ENCODE measurements at regions of chr20 and their contacts with region 1.

Region 1: DNA sequence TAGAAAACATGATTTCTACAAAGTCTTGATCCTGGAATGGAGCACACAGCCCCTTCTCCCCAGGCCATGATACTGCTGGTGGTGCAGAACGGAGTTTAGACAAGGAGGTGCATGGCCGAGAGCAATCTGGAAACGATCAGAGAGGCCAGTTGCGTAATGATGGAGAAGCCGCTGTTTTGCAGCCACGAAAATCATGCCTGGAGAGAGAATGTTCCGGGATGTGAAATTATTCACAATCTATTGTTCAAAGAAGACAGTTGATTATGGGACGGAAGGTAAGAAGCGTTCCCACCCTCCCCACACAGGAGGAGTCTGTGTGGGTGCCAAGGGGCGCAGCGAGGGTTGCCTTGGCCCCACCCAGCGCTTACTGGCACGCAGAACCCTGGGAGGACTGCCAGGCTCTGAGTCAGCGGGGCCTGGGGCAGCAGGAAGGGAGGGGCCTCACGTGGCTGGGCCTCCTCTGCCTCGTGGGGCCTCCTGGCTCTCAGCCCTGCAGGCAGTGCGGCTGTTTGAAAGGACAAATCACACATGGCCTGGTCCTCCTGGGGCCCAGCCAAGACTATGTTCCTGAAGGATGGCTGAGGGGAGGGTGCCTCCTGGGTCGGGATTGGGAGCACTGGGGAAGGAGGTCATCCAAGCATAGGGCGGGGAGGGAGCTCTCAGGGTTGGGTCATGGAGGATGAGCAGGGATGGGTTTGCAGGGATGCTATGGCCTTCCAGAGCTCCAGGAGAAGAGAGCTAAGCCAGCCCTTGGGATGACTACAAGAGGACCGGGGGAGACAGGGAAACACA is 8.7 kb upstream of the AP5S1 start:
- DNase-seq: peak; percentile 94
- H3K4me3 Mint-ChIP-seq: peak overlapping the region; percentile 71
- H3K27ac Mint-ChIP-seq: peak overlapping the region; percentile 99
- H3K4me1 Mint-ChIP-seq: peaks cover 81% of the 10 kb centered on the region
- H3K27me3 Mint-ChIP-seq: no peaks in the 10 kb centered on the region

Region 2: GRCh38 chr20:3795511-3796468 is 15.9 kb before region 1 on chr20 and contains the start of gene CDC25B:
- CTCF ChIA-PET with region 1: interaction called, 16 read pairs
- POLR2A ChIA-PET with region 1: interaction called, 4 read pairs
- DNase-seq: peak; percentile 95
- H3K4me3 Mint-ChIP-seq: peak within 1 kb of the TSS; percentile 91
- H3K27ac Mint-ChIP-seq: peak within 1 kb of the TSS; percentile 96
- H3K4me1 Mint-ChIP-seq: peaks cover 41% of the 10 kb centered on the region
- H3K27me3 Mint-ChIP-seq: no peaks in the 10 kb centered on the region
- total RNA-seq, gene CDC25B: 452 to 454 TPM

Region 3: GRCh38 chr20:3940905-3941304 is 129.2 kb after region 1 on chr20:
- CTCF ChIA-PET with region 1: no interaction called
- POLR2A ChIA-PET with region 1: no interaction called
- DNase-seq: no peak
- H3K4me3 Mint-ChIP-seq: no peak overlapping the region
- H3K27ac Mint-ChIP-seq: no peak overlapping the region
- H3K4me1 Mint-ChIP-seq: no peaks in the 10 kb centered on the region
- H3K27me3 Mint-ChIP-seq: no peaks in the 10 kb centered on the region

Region 4: DNA sequence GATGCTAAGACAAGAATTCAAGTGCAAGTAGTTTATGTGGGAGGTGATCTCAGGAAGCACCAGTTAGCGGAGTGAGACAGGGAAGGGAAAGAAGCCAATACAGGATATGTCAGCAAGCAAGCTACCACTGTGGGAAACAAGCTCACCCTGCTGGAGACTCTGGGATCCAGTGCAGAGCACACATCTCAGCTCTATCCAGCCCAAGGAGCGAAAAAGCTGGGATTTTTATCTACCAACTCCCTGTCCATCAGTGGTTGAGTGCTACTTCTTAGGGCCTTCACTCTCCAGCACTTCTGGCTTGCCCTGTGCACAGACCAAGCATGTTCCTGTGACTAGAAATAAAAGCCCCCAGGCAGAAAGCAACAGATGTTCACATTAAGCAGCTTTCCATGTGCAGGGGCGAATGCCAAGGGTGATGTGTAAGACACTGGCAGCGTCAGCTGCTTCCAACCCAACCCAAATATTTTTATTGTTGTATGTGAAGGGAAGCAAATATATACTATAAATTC is 214.5 kb after region 1 on chr20:
- CTCF ChIA-PET with region 1: no interaction called
- POLR2A ChIA-PET with region 1: no interaction called
- DNase-seq: no peak
- H3K4me3 Mint-ChIP-seq: no peak overlapping the region
- H3K27ac Mint-ChIP-seq: no peak overlapping the region
- H3K4me1 Mint-ChIP-seq: no peaks in the 10 kb centered on the region
- H3K27me3 Mint-ChIP-seq: peaks cover 54% of the 10 kb centered on the region